ENCODE measurements at regions of chr13 and their contacts with region 1.

Region 1: DNA sequence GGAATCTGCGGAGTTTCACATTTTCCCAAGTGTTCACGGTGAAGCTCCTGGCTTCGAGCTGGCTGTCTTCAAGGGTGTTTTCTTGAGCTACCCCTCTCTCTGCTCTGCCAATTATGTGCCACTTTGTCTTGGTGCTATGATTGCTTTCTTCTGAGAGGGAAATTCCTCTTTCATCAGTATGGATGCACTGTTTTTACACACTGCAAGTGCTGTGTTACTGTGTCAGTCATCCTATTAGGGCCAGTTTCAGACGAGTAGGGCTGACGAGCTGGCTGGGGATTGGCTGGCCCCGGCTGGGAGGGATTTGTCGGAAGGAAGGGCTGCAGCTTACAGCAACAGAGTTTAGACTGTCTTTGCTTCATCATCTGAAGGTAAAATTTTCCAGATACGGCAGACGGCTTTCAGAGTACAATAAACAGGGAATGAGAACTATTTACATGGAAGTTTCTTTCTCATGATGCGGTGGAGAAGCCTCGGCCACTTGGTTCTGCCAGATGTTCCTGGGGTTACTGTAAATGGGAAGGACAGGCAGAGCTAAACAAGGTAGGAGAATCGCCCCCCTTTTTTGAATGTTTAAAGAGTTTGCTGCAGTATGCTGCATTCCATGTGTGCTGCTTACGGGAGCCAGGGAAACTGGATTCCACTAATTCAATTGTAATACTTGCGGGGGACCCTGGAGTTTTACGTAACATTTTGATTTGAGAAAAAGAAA is at the start of gene MBNL2:
- DNase-seq: peak; percentile 91
- ATAC-seq: peak; percentile 94 to 95
- H3K4me3 ChIP-seq: peak within 1 kb of the TSS; percentile 68
- H3K27ac ChIP-seq: peak within 1 kb of the TSS; percentile 91
- H3K4me1 ChIP-seq: peaks cover 38% of the 10 kb centered on the region
- H3K27me3 ChIP-seq: no peaks in the 10 kb centered on the region
- CTCF ChIP-seq: no peak
- total RNA-seq, gene MBNL2: 58.2 TPM

Region 2: DNA sequence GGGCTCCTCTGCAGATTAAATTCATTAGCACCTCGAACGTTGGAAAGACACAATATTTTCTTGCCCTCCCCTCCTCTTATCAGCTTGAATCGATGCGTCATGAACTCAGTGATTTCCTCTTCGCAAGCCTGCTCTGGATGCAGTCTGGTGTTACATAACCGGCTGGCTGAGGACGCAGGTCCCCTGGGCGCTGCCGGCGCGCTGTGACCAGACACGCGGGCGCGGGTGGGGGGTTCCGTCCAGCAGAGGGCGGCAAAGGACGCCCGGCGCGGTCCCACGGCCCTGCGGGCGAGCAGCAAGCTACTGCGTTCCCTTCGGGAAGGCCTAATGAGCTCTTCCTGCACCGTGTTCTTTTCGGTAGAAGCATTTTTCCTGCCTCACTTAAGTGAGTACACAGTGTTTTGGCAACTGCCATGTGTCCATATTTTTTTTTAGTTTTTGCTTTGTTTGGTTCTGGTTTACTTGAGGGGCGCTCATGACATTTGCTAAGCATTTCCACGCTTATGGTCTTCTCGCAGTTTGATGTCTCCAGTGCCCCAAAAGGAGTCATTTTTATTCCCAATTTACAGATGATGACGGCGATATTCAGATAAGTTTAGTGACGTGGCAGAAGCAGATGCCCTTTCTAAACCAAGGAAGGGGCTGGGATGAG is 112.2 kb before region 1 on chr13:
- intact Hi-C with region 1: loop called (anchors 10 kb)
- DNase-seq: peak; percentile 92
- ATAC-seq: peak; percentile 97 to 99
- H3K4me3 ChIP-seq: peak overlapping the region; percentile 16
- H3K27ac ChIP-seq: peak overlapping the region; percentile 20
- H3K4me1 ChIP-seq: peaks cover 54% of the 10 kb centered on the region
- H3K27me3 ChIP-seq: no peaks in the 10 kb centered on the region
- CTCF ChIP-seq: peak; percentile 97

Region 3: GRCh38 chr13:97344265-97345175 is 122.4 kb after region 1 on chr13:
- intact Hi-C with region 1: loop called (anchors 5 kb)
- DNase-seq: peak; percentile 55
- ATAC-seq: peak; percentile 72 to 84
- H3K4me3 ChIP-seq: no peak overlapping the region
- H3K27ac ChIP-seq: no peak overlapping the region
- H3K4me1 ChIP-seq: peaks cover 5% of the 10 kb centered on the region
- H3K27me3 ChIP-seq: no peaks in the 10 kb centered on the region
- CTCF ChIP-seq: peak; percentile 70

Region 4: GRCh38 chr13:97468331-97468730 is 246.2 kb after region 1 on chr13:
- intact Hi-C with region 1: no loop called
- DNase-seq: no peak
- ATAC-seq: no peak
- H3K4me3 ChIP-seq: no peak overlapping the region
- H3K27ac ChIP-seq: no peak overlapping the region
- H3K4me1 ChIP-seq: no peaks in the 10 kb centered on the region
- H3K27me3 ChIP-seq: no peaks in the 10 kb centered on the region
- CTCF ChIP-seq: no peak

Region 5: GRCh38 chr13:97535614-97536013 is 313.5 kb after region 1 on chr13:
- intact Hi-C with region 1: no loop called
- DNase-seq: no peak
- ATAC-seq: no peak
- H3K4me3 ChIP-seq: no peak overlapping the region
- H3K27ac ChIP-seq: no peak overlapping the region
- H3K4me1 ChIP-seq: no peaks in the 10 kb centered on the region
- H3K27me3 ChIP-seq: no peaks in the 10 kb centered on the region
- CTCF ChIP-seq: no peak

Measured in lower lobe of right lung (tissue), 2 donors.